ENCODE measurements at regions of chr11 and their contacts with region 1.

Region 1: DNA sequence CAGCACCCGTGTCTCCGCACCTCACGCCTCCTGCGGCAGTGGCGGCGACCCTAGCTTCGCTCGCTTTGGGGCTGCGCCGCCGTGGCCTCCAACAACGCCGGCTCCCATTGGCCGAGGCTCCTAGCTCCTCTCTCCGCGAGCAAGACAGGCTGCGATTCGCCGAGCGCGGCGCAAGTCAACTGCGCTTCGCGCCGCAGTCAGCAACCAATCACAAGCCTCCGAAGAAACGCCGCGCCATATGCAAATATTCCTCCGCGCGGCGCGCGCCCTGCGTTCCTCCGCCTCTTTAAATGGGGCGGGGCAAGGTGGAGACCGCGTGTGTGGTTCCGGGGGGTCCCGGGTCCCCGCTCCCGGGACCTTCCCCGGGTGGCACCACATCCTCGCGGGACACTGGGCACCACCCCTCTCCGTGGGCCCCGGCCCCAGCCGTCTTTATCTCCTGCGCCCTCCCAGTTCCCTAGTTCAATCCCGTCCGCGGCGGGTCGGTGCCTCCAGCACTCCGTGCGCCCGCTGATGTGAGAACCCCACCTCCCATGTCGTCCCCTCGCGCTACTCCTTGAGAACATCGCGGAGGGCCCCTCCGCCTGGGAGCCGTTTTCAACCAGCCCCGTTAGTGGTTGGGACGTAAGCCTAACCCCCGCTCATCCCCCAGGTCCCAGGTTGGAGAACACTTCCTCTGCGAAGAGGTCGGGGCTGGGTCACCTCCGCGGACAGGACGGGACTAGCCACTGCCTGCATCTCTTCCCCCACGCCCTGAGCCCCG is at the start of gene NAP1L4:
- DNase-seq: peak; percentile 97
- H3K4me3 Mint-ChIP-seq: peak within 1 kb of the TSS; percentile 99
- H3K27ac Mint-ChIP-seq: peak within 1 kb of the TSS; percentile 97
- H3K4me1 Mint-ChIP-seq: peaks cover 25% of the 10 kb centered on the region
- H3K27me3 Mint-ChIP-seq: no peaks in the 10 kb centered on the region
- total RNA-seq, gene NAP1L4: 299 to 314 TPM

Region 2: GRCh38 chr11:2909133-2909902 is 83.1 kb before region 1 on chr11:
- CTCF ChIA-PET with region 1: no interaction called
- POLR2A ChIA-PET with region 1: no interaction called
- DNase-seq: no peak
- H3K4me3 Mint-ChIP-seq: no peak overlapping the region
- H3K27ac Mint-ChIP-seq: no peak overlapping the region
- H3K4me1 Mint-ChIP-seq: peaks cover 9% of the 10 kb centered on the region
- H3K27me3 Mint-ChIP-seq: no peaks in the 10 kb centered on the region

Region 3: DNA sequence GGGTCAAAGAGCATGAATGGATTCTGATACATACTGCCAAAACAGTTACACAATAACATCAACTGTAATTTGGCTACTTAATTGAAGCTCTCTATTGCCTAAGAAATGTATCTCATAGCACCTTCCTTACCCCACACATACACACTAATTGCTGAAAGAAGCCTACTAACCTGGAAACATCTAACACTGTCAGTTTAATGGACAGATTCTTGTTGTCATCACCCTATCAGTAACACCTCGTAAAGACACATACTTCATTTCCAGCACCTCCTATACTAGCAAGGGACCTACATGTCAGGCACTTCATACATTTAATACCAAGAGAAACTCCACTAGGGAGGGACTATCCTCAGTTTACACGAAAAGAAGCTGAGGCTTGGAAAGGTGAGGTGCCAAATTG is 10.2 kb before region 1 on chr11:
- CTCF ChIA-PET with region 1: interaction called, 4 read pairs
- POLR2A ChIA-PET with region 1: interaction called, 36 read pairs
- DNase-seq: no peak
- H3K4me3 Mint-ChIP-seq: no peak overlapping the region
- H3K27ac Mint-ChIP-seq: peak overlapping the region; percentile 47
- H3K4me1 Mint-ChIP-seq: peaks cover 57% of the 10 kb centered on the region
- H3K27me3 Mint-ChIP-seq: no peaks in the 10 kb centered on the region

Region 4: GRCh38 chr11:3021125-3021524 is 28.7 kb after region 1 on chr11:
- CTCF ChIA-PET with region 1: interaction called, 46 read pairs
- POLR2A ChIA-PET with region 1: interaction called, 307 read pairs
- DNase-seq: peak; percentile 44
- H3K4me3 Mint-ChIP-seq: no peak overlapping the region
- H3K27ac Mint-ChIP-seq: no peak overlapping the region
- H3K4me1 Mint-ChIP-seq: peaks cover 41% of the 10 kb centered on the region
- H3K27me3 Mint-ChIP-seq: no peaks in the 10 kb centered on the region

Region 5: GRCh38 chr11:3049430-3050243 is 57.2 kb after region 1 on chr11:
- CTCF ChIA-PET with region 1: interaction called, 5 read pairs
- POLR2A ChIA-PET with region 1: interaction called, 18 read pairs
- DNase-seq: peak; percentile 88
- H3K4me3 Mint-ChIP-seq: peak overlapping the region; percentile 61
- H3K27ac Mint-ChIP-seq: peak overlapping the region; percentile 95
- H3K4me1 Mint-ChIP-seq: peaks cover 49% of the 10 kb centered on the region
- H3K27me3 Mint-ChIP-seq: no peaks in the 10 kb centered on the region

Region 6: GRCh38 chr11:3057069-3057963 is 64.9 kb after region 1 on chr11 and contains the start of gene CARS1:
- CTCF ChIA-PET with region 1: interaction called, 12 read pairs
- POLR2A ChIA-PET with region 1: interaction called, 10 read pairs
- DNase-seq: peak; percentile 96
- H3K4me3 Mint-ChIP-seq: peak within 1 kb of the TSS; percentile 81
- H3K27ac Mint-ChIP-seq: peak within 1 kb of the TSS; percentile 83
- H3K4me1 Mint-ChIP-seq: peaks cover 47% of the 10 kb centered on the region
- H3K27me3 Mint-ChIP-seq: peaks cover 4% of the 10 kb centered on the region
- total RNA-seq, gene CARS1: 106 to 121 TPM